MCF 10A (cell line): ENCODE measurements at regions of chr1 and their contacts with region 1.

Region 1: GRCh38 chr1:183655562-183656075 is 2.5 kb upstream of the APOBEC4 start:
- DNase-seq: peak; percentile 90
- H3K4me3 Mint-ChIP-seq: no peak overlapping the region
- H3K27ac Mint-ChIP-seq: peak overlapping the region; percentile 1
- H3K4me1 Mint-ChIP-seq: peaks cover 19% of the 10 kb centered on the region
- H3K27me3 Mint-ChIP-seq: no peaks in the 10 kb centered on the region
- CTCF ChIP-seq: peak; percentile 92

Region 2: GRCh38 chr1:183635606-183636333 is 19.8 kb before region 1 on chr1 and contains the start of gene ARPC5:
- CTCF ChIA-PET with region 1: interaction called, 24 read pairs
- POLR2A ChIA-PET with region 1: interaction called, 6 read pairs
- intact Hi-C with region 1: no loop called
- DNase-seq: peak; percentile 99
- H3K4me3 Mint-ChIP-seq: peak within 1 kb of the TSS; percentile 100
- H3K27ac Mint-ChIP-seq: peak within 1 kb of the TSS; percentile 97
- H3K4me1 Mint-ChIP-seq: peaks cover 15% of the 10 kb centered on the region
- H3K27me3 Mint-ChIP-seq: no peaks in the 10 kb centered on the region
- CTCF ChIP-seq: no peak
- total RNA-seq, gene ARPC5: 195 and 240 TPM in 2 replicates

Region 3: GRCh38 chr1:183676586-183677189 is 21.1 kb after region 1 on chr1:
- CTCF ChIA-PET with region 1: interaction called, 189 read pairs
- POLR2A ChIA-PET with region 1: interaction called, 6 read pairs
- intact Hi-C with region 1: no loop called
- DNase-seq: peak; percentile 37
- H3K4me3 Mint-ChIP-seq: no peak overlapping the region
- H3K27ac Mint-ChIP-seq: no peak overlapping the region
- H3K4me1 Mint-ChIP-seq: peaks cover 14% of the 10 kb centered on the region
- H3K27me3 Mint-ChIP-seq: no peaks in the 10 kb centered on the region
- CTCF ChIP-seq: no peak

Region 4: GRCh38 chr1:183896466-183897048 is 240.9 kb after region 1 on chr1:
- CTCF ChIA-PET with region 1: interaction called, 11 read pairs
- POLR2A ChIA-PET with region 1: no interaction called
- intact Hi-C with region 1: no loop called
- DNase-seq: peak; percentile 79
- H3K4me3 Mint-ChIP-seq: no peak overlapping the region
- H3K27ac Mint-ChIP-seq: no peak overlapping the region
- H3K4me1 Mint-ChIP-seq: peaks cover 6% of the 10 kb centered on the region
- H3K27me3 Mint-ChIP-seq: no peaks in the 10 kb centered on the region
- CTCF ChIP-seq: no peak

Region 5: GRCh38 chr1:183932412-183932811 is 276.8 kb after region 1 on chr1:
- CTCF ChIA-PET with region 1: interaction called, 16 read pairs
- POLR2A ChIA-PET with region 1: no interaction called
- intact Hi-C with region 1: no loop called
- DNase-seq: peak; percentile 68
- H3K4me3 Mint-ChIP-seq: no peak overlapping the region
- H3K27ac Mint-ChIP-seq: no peak overlapping the region
- H3K4me1 Mint-ChIP-seq: no peaks in the 10 kb centered on the region
- H3K27me3 Mint-ChIP-seq: no peaks in the 10 kb centered on the region
- CTCF ChIP-seq: no peak

Region 6: DNA sequence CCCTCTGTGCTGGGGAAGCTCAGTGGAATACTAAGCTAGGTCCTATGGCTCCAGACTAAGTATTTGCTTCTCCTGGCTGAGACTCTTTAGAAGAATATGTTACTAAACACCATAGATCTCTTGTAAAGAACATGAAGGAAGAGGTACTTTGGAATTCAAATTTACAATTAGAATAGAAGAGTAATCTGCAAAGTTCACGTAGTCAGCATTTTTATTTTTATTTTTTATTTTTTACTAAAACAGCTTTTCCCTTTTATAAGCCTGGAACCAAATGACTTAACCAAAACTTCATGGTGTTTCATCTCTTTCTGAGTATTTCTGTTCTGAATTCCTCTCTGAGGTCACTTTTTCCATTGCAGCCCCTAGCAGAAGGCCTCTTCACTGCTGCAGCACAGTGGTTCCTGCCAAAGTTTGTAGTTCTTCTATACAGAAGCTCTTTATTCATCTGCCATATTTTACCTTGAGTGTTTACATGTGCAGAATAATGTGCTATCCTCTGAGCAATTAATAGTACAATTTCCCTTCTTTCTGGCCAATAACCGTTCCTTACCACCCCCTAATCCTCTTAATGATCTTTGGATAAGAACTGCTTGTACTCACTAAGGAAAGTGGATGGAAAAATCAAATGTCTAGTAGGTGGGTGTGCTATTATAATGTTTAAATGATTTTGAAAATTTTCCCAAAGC is 423.1 kb after region 1 on chr1:
- CTCF ChIA-PET with region 1: no interaction called
- POLR2A ChIA-PET with region 1: no interaction called
- intact Hi-C with region 1: no loop called
- DNase-seq: no peak
- H3K4me3 Mint-ChIP-seq: no peak overlapping the region
- H3K27ac Mint-ChIP-seq: no peak overlapping the region
- H3K4me1 Mint-ChIP-seq: no peaks in the 10 kb centered on the region
- H3K27me3 Mint-ChIP-seq: no peaks in the 10 kb centered on the region
- CTCF ChIP-seq: no peak

Region 7: DNA sequence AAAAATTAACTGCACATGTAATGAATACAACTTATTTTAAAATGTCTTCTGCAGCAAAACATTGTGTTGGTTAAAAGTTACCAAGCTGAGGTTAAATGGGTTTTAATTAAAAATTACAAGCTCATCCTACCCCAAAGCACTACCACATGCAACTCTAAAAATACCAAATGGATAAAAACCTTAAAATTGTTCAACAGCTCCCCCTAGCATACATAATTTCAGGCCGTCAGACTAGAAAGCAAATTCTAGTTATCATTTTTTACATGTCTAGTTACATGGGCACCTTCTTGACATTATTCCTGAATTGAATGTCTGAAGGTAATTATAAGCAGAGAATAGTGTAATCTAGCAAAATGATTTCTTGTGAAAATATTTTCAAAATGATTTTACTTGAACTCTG is 907.7 kb after region 1 on chr1:
- CTCF ChIA-PET with region 1: no interaction called
- POLR2A ChIA-PET with region 1: no interaction called
- intact Hi-C with region 1: loop called (anchors 5 kb)
- DNase-seq: peak; percentile 56
- H3K4me3 Mint-ChIP-seq: no peak overlapping the region
- H3K27ac Mint-ChIP-seq: no peak overlapping the region
- H3K4me1 Mint-ChIP-seq: peaks cover 32% of the 10 kb centered on the region
- H3K27me3 Mint-ChIP-seq: no peaks in the 10 kb centered on the region
- CTCF ChIP-seq: peak; percentile 57